ENCODE measurements at regions of chr9 and their contacts with region 1.

Region 1: GRCh38 chr9:89362647-89363310 is 44.5 kb downstream of the SECISBP2 start:
- DNase-seq: no peak
- H3K4me3 ChIP-seq: no peak overlapping the region
- H3K27ac ChIP-seq: no peak overlapping the region
- H3K4me1 ChIP-seq: no peaks in the 10 kb centered on the region
- H3K27me3 ChIP-seq: no peaks in the 10 kb centered on the region
- CTCF ChIP-seq: no peak
- EP300 ChIP-seq: no peak
- POLR2A ChIP-seq: 0 out of 3 replicates have a peak, but pooled peaks of 1 of the 2 experiments have one; percentile 12
- RAD21 ChIP-seq: no peak

Region 2: GRCh38 chr9:89375191-89375760 is 12.5 kb after region 1 on chr9:
- CTCF ChIA-PET with region 1: interaction called, 4 read pairs
- POLR2A ChIA-PET with region 1: interaction called, 12 read pairs
- DNase-seq: no peak
- H3K4me3 ChIP-seq: no peak overlapping the region
- H3K27ac ChIP-seq: no peak overlapping the region
- H3K4me1 ChIP-seq: no peaks in the 10 kb centered on the region
- H3K27me3 ChIP-seq: no peaks in the 10 kb centered on the region
- CTCF ChIP-seq: no peak
- EP300 ChIP-seq: no peak
- POLR2A ChIP-seq: no peak
- RAD21 ChIP-seq: no peak

Measured in H1 (cell line).